HEK293 (cell line): ENCODE measurements at regions of chr1 and their contacts with region 1.

Region 1: GRCh38 chr1:119882132-119882952 is 14.0 kb downstream of the ADAM30 start:
- H3K4me3 ChIP-seq: no peak overlapping the region
- H3K27ac ChIP-seq: no peak overlapping the region
- H3K4me1 ChIP-seq: no peaks in the 10 kb centered on the region
- CTCF ChIP-seq: no peak

Region 2: GRCh38 chr1:119870917-119871596 is 11.3 kb before region 1 on chr1:
- CTCF ChIA-PET with region 1: interaction called, 11 read pairs
- POLR2A ChIA-PET with region 1: no interaction called
- H3K4me3 ChIP-seq: no peak overlapping the region
- H3K27ac ChIP-seq: no peak overlapping the region
- H3K4me1 ChIP-seq: no peaks in the 10 kb centered on the region
- CTCF ChIP-seq: peak; percentile 78